Activated CD4-positive, alpha-beta memory T cell treated with anti-CD3 and anti-CD28 coated beads for 36 hours (primary cell): ENCODE measurements at regions of chr1 and their contacts with region 1.

Region 1: GRCh38 chr1:170531758-170532657 is at the start of gene GORAB:
- DNase-seq: peak; percentile 93
- H3K4me3 Mint-ChIP-seq: no peak within 1 kb of the TSS
- H3K27ac Mint-ChIP-seq: no peak within 1 kb of the TSS
- H3K4me1 Mint-ChIP-seq: peaks cover 15% of the 10 kb centered on the region
- H3K27me3 Mint-ChIP-seq: no peaks in the 10 kb centered on the region
- total RNA-seq, gene GORAB: 8.5 to 9.0 TPM

Region 2: DNA sequence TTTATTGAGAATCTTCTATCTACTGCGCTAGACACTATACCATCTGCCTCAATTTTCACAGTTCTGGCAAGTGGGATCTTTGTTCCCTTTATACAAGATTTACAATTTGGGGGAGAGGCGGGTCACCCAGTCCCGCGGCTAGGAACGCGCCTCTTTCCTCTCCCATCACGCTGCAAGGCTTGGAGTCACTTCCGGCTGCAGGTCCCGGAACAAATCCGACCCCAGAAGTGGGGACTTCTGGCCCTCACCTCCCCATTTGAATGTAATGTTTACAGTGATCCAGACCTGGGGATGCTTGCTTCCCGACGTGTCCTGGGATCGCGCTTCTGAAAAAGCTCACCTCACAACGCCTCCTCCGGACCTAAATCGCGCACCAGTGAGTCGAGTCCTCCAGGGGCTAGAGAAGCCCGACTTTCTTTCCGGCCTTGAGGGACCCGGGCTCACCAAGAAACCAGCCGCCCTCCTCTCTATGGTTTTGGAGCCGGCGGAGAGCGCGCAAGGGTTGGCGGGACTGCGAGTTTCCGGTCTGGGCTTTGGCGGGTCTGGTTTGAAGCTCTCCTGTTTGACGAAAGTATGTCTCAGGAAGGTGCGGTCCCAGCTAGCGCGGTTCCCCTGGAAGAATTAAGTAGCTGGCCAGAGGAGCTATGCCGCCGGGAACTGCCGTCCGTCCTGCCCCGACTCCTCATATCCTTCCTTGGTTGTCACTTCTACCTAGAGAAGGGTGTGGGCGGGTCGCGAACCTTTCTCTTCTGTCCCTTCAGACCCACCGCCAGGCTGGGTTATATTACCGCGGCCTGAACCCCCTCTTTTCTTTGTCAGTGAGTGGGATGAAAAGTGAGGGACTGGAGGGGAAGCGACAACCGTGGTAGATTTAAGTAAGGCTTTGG is 737.2 kb before region 1 on chr1 and contains the start of gene METTL18:
- CTCF ChIA-PET with region 1: no interaction called
- POLR2A ChIA-PET with region 1: no interaction called
- intact Hi-C with region 1: loop called (anchors 1 kb)
- DNase-seq: peak; percentile 96
- H3K4me3 Mint-ChIP-seq: peak within 1 kb of the TSS; percentile 100
- H3K27ac Mint-ChIP-seq: peak within 1 kb of the TSS; percentile 99
- H3K4me1 Mint-ChIP-seq: peaks cover 44% of the 10 kb centered on the region
- H3K27me3 Mint-ChIP-seq: no peaks in the 10 kb centered on the region
- total RNA-seq, gene METTL18: 10.8 to 10.9 TPM

Region 3: DNA sequence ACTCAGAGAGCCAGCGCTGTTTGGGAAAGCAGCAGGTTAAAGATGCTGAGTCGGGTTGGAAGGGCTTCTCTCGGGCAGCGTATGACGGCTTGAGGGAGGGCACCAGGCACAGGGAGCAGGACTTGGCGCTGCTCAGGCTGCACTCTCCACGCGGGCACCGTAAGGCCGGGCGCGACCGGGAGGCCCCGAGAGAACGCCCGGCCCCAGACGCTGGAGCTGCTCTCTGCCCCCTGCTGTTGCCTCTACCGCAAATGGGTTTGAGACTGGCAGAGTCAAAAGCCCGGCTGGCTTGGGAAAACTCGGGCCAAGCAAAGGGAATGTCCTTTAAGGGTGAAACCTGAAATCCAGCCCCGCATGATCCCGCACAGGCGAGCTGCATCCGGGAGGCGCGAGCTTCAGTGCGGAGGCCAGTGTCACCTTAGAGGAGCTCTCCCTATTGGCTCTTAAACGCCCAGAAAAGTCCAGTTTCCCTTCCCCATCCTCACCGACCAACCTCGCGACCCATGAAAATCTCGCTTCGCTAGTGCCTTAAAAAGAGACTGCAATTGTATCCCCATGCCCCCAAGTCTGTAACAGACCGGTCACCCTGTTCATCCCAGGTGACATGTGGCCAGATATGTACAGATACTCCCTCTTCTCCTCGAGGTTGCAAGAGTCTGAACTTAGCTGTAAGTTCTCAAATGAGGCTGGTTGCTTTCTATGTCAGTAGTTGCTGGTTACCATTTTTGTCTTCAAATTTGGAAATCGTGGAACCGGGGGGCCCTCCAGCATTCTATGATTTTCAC is 133.0 kb after region 1 on chr1:
- CTCF ChIA-PET with region 1: no interaction called
- POLR2A ChIA-PET with region 1: no interaction called
- intact Hi-C with region 1: loop called (anchors 5 kb)
- DNase-seq: no peak
- H3K4me3 Mint-ChIP-seq: peak overlapping the region; percentile 41
- H3K27ac Mint-ChIP-seq: no peak overlapping the region
- H3K4me1 Mint-ChIP-seq: peaks cover 39% of the 10 kb centered on the region
- H3K27me3 Mint-ChIP-seq: peaks cover 84% of the 10 kb centered on the region